Activated naive CD4-positive, alpha-beta T cell treated with anti-CD3 and anti-CD28 coated beads for 36 hours (primary cell): ENCODE measurements at regions of chr11 and their contacts with region 1.

Region 1: GRCh38 chr11:105862736-105863367 is 159.2 kb downstream of the MSANTD4 start:
- DNase-seq: no peak
- H3K4me3 Mint-ChIP-seq: no peak overlapping the region
- H3K27ac Mint-ChIP-seq: no peak overlapping the region
- H3K4me1 Mint-ChIP-seq: no peaks in the 10 kb centered on the region
- H3K27me3 Mint-ChIP-seq: peaks cover 17% of the 10 kb centered on the region

Region 2: DNA sequence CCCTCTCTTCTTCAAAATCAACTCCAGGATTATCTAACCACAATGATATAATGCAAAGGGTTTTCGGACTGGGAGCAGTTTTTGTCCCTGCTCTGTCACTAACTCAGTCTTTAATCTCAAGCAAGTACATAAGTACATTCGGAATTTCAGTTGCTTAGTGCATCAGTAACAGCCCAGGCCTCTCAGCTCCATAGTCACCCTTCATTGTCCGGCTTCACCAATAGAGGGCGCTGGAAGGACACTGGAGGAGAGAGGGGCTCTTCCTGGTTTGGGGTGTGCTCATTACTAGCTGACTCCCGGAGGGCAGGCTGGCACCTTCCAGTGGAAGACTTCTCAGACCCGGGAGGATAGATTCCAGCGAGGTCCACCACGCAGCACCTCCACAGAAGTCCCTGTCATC is 1608.5 kb before region 1 on chr11:
- CTCF ChIA-PET with region 1: no interaction called
- intact Hi-C with region 1: loop called (anchors 2 kb)
- DNase-seq: peak; percentile 27
- H3K4me3 Mint-ChIP-seq: no peak overlapping the region
- H3K27ac Mint-ChIP-seq: no peak overlapping the region
- H3K4me1 Mint-ChIP-seq: no peaks in the 10 kb centered on the region
- H3K27me3 Mint-ChIP-seq: no peaks in the 10 kb centered on the region

Region 3: GRCh38 chr11:104531075-104531474 is 1331.8 kb before region 1 on chr11:
- CTCF ChIA-PET with region 1: no interaction called
- intact Hi-C with region 1: loop called (anchors 5 kb)
- DNase-seq: peak; percentile 11
- H3K4me3 Mint-ChIP-seq: no peak overlapping the region
- H3K27ac Mint-ChIP-seq: no peak overlapping the region
- H3K4me1 Mint-ChIP-seq: peaks cover 3% of the 10 kb centered on the region
- H3K27me3 Mint-ChIP-seq: no peaks in the 10 kb centered on the region

Region 4: DNA sequence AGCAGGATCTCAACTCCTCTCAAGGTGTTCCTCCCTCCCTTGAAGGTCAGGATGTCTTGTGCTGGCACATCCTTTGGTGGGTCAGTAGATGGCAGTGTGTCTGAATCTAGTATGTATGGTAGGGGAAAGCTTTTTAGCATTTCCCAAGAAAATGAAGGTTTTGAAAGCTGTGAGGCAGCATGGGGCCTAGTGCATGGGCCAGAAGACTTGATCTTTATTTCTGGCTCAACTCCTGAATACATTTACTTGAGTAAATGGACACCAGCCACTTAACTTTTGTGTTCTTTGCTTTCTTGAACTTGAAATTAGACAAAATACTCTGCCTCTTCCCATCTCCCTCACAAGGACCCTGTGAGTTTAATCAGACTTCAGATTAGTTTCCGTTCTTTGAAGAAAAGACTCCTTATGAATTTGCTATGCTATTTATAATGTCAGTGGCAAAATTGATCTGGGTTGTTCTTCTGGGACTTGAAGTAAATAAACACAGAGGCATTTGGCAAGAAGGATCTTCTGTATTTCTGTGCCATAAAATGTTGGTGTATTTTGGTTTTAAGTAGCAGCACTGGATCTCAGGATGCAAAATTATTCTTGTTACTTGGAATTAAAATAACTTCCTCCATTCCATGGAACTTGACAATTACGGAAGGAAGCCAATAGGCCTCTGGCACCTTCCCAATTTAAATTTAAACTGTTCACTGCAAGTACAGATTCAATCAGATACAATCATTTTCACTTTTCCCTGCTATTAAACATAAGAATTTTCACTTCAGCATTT is 1253.4 kb before region 1 on chr11:
- CTCF ChIA-PET with region 1: interaction called, 3 read pairs
- intact Hi-C with region 1: loop called (anchors 1 kb)
- DNase-seq: peak; percentile 35
- H3K4me3 Mint-ChIP-seq: no peak overlapping the region
- H3K27ac Mint-ChIP-seq: no peak overlapping the region
- H3K4me1 Mint-ChIP-seq: peaks cover 13% of the 10 kb centered on the region
- H3K27me3 Mint-ChIP-seq: no peaks in the 10 kb centered on the region

Region 5: GRCh38 chr11:104946907-104947306 is 915.9 kb before region 1 on chr11:
- CTCF ChIA-PET with region 1: no interaction called
- intact Hi-C with region 1: loop called (anchors 1 kb)
- DNase-seq: peak; percentile 47
- H3K4me3 Mint-ChIP-seq: no peak overlapping the region
- H3K27ac Mint-ChIP-seq: peak overlapping the region; percentile 6
- H3K4me1 Mint-ChIP-seq: peaks cover 7% of the 10 kb centered on the region
- H3K27me3 Mint-ChIP-seq: no peaks in the 10 kb centered on the region

Region 6: DNA sequence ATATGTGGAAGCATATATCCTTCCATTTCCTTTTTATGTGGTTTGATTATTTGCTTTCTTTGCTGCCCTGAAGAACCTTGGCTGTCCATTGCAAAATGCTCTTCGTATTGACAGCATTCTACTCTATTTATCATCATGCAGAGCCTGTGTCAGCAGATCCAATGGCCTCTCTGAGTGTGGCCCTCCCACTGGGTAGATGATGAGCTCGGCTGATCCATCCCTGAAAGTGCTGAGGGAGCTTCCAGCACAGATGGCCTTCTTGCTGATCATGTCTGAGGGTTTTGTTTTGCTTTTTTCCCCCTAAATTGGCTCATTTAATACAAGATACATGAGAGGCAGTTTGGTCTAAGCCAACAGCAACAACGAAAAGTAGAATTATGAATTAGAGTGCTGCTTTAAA is 72.0 kb before region 1 on chr11:
- CTCF ChIA-PET with region 1: no interaction called
- intact Hi-C with region 1: no loop called
- DNase-seq: no peak
- H3K4me3 Mint-ChIP-seq: no peak overlapping the region
- H3K27ac Mint-ChIP-seq: no peak overlapping the region
- H3K4me1 Mint-ChIP-seq: no peaks in the 10 kb centered on the region
- H3K27me3 Mint-ChIP-seq: no peaks in the 10 kb centered on the region

Region 7: DNA sequence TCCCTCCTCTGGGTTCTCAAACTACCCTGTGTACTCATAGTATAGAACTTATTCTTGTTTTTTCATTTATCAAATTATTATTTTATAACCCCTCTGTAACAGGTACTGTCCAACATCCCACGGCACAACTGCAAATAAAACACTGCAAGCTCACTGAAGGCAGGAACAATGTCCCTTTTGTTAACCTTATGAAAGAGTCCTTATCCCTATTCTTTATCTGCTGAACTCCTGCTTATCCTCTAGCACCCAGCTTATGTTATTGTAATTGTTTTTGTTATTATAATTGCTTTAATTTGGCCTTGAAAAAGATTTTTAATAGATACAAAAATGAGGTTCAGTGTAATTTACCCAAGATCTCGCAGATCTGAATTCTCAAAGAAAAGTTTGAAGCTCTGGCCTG is 28.8 kb after region 1 on chr11:
- CTCF ChIA-PET with region 1: no interaction called
- intact Hi-C with region 1: no loop called
- DNase-seq: no peak
- H3K4me3 Mint-ChIP-seq: no peak overlapping the region
- H3K27ac Mint-ChIP-seq: no peak overlapping the region
- H3K4me1 Mint-ChIP-seq: no peaks in the 10 kb centered on the region
- H3K27me3 Mint-ChIP-seq: peaks cover 2% of the 10 kb centered on the region